ENCODE measurements at regions of chr7 and their contacts with region 1.

Region 1: DNA sequence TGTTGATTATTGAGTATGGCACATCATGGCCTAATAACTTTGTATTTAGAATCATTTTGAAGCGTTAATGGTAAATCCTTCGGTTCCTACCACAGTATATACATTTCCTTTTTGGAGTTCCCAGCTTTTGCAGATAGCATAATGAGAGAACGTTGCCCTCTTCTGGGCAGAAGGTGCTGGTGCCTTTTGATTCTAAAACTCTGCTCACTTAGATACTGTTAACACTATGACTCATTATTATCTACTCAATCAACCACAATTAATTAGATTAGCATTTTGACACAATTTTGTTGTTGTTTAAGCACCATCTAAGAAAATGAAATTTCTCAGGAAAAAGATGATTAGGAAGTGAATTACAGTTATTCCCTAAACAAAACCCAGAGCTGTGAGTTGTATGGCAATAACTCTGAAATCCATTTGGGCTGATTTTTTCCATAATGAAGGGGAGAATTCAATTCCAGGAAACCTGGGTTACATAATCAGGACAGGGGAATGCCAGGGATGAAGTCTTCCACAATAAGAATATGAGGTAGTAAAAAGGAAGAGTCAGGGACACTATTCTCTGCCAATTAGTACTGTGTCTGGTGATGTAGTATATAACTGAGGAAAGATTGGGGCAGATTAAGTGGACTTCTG is 11.5 kb upstream of the DLD start:
- DNase-seq: peak; percentile 55
- H3K4me3 ChIP-seq: no peak overlapping the region
- H3K27ac ChIP-seq: no peak overlapping the region
- H3K4me1 ChIP-seq: peaks cover 6% of the 10 kb centered on the region
- H3K27me3 ChIP-seq: no peaks in the 10 kb centered on the region
- CTCF ChIP-seq: peak; percentile 82 to 90

Region 2: DNA sequence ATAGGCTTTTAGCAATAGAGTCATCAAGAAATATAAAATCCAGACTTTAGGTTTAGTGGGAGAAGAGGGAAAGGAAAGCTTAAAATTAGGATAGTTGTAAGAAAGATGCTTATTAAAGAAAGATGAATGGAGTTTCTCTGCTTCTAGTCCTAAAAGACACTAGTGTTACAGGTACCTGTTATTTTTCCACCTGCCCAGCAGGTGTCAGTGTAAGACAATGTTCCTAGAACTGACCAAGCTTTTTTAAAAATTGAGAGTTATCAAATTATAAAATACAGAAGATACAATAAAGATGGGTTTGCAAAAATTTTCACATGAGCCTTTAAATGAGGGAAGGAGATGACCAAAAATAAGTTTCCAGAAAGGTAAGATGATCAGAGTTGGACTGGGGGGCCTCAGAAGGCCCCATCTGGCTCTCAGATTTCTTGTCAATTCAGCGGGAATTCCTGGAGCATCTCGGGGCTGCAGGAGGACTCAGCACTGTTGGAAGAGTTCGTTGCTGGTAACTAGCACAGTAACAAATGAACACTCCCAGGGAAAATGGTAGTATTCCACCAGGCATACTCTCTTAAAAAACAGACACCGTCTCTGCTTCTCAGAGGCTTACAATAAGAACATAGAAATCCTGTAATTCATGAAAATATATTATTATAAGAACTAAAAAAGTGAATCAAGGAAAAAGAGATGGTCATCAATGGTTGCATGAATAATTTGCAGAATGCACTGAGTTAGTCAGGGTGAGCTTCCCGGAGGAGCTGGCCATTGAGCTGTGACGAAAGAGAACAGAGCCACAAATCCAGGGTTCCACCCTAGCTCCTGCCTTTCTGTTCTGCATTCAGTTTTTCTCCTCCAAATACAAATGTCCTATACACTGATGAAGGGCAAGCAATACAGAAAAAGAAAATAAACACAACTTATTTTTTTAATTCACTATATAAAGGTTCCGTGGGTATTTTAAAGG is 1086.2 kb before region 1 on chr7:
- CTCF ChIA-PET with region 1: interaction called, 6 read pairs
- dilution Hi-C with region 1: no loop called
- in situ Hi-C with region 1: loop called in 1 of 2 experiments (anchors 25 kb)
- intact Hi-C with region 1: loop called (anchors 5 kb)
- DNase-seq: peak; percentile 12
- H3K4me3 ChIP-seq: no peak overlapping the region
- H3K27ac ChIP-seq: no peak overlapping the region
- H3K4me1 ChIP-seq: no peaks in the 10 kb centered on the region
- H3K27me3 ChIP-seq: peaks cover 5% of the 10 kb centered on the region
- CTCF ChIP-seq: peak; percentile 51 to 71

Region 3: DNA sequence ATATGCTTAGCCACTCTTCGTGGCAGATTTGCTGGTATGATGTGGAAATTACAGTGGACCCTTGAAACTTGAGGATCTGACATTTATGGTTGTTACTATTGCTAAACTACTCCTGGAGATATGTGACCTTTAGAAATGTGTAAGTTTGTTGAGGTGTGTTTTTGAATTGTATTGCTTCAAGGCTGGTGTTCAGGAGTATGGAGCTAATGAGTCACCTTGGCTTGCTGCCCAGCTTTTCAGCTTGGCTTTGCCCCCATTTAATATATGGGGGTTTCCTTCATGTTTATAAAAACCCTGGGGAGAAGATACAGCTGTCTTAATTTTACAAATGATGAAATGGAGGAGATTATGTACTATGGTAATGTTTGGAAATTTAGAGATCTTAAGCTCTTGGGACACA is 699.1 kb before region 1 on chr7:
- CTCF ChIA-PET with region 1: interaction called, 4 read pairs
- dilution Hi-C with region 1: no loop called
- in situ Hi-C with region 1: loop called in 1 of 2 experiments (anchors 25 kb)
- intact Hi-C with region 1: no loop called
- DNase-seq: peak; percentile 84
- H3K4me3 ChIP-seq: no peak overlapping the region
- H3K27ac ChIP-seq: peak overlapping the region; percentile 54
- H3K4me1 ChIP-seq: peaks cover 17% of the 10 kb centered on the region
- H3K27me3 ChIP-seq: no peaks in the 10 kb centered on the region
- CTCF ChIP-seq: no peak

Region 4: GRCh38 chr7:107462740-107463444 is 416.6 kb before region 1 on chr7:
- CTCF ChIA-PET with region 1: interaction called, 7 read pairs
- dilution Hi-C with region 1: no loop called
- in situ Hi-C with region 1: loop called in 1 of 2 experiments (anchors 10 kb)
- intact Hi-C with region 1: loop called (anchors 1 kb)
- DNase-seq: peak; percentile 60
- H3K4me3 ChIP-seq: no peak overlapping the region
- H3K27ac ChIP-seq: no peak overlapping the region
- H3K4me1 ChIP-seq: no peaks in the 10 kb centered on the region
- H3K27me3 ChIP-seq: no peaks in the 10 kb centered on the region
- CTCF ChIP-seq: peak; percentile 88 to 91

Region 5: GRCh38 chr7:107743567-107744344 is 135.8 kb before region 1 on chr7 and contains the start of gene CBLL1:
- CTCF ChIA-PET with region 1: interaction called, 25 read pairs
- dilution Hi-C with region 1: no loop called
- in situ Hi-C with region 1: loop called (anchors 5 to 10 kb)
- intact Hi-C with region 1: loop called (anchors 1 kb)
- DNase-seq: peak; percentile 94
- H3K4me3 ChIP-seq: peak within 1 kb of the TSS; percentile 75 to 99 (median 93)
- H3K27ac ChIP-seq: peak within 1 kb of the TSS; percentile 75
- H3K4me1 ChIP-seq: peaks cover 20% of the 10 kb centered on the region
- H3K27me3 ChIP-seq: no peaks in the 10 kb centered on the region
- CTCF ChIP-seq: peak; percentile 37 to 76
- total RNA-seq, gene CBLL1: 26.9 to 37.8 TPM